PC-9 (cell line): ENCODE measurements at regions of chr3 and their contacts with region 1.

Region 1: DNA sequence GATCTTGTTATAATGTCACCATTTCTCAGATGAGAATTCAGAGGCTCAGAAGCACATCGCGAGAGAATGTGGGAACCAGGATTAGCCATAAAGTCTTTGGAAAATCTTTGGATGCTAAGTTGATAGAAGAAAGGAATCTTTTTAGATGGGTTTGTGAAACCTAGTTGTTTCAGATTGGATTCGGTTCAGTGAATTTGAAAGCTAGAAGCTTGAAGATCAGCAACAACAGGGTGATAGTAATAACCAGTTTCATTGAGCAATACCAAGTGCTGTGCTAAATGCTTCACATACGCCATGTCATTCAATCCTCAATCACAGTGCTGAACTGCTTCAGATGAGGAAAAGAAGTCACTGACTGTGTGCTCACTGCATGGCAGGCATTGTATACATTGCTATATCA is 47.4 kb upstream of the MITF start:
- DNase-seq: no peak
- H3K4me3 ChIP-seq: no peak overlapping the region
- H3K27ac ChIP-seq: no peak overlapping the region
- H3K4me1 ChIP-seq: no peaks in the 10 kb centered on the region
- H3K27me3 ChIP-seq: no peaks in the 10 kb centered on the region
- CTCF ChIP-seq: no peak

Region 2: GRCh38 chr3:69439643-69440270 is 252.1 kb before region 1 on chr3:
- CTCF ChIA-PET with region 1: no interaction called
- POLR2A ChIA-PET with region 1: interaction called, 21 read pairs
- intact Hi-C with region 1: no loop called
- DNase-seq: peak in 1 of 2 experiments; percentile 3
- H3K4me3 ChIP-seq: no peak overlapping the region
- H3K27ac ChIP-seq: no peak overlapping the region
- H3K4me1 ChIP-seq: no peaks in the 10 kb centered on the region
- H3K27me3 ChIP-seq: no peaks in the 10 kb centered on the region
- CTCF ChIP-seq: peak; percentile 68

Region 3: DNA sequence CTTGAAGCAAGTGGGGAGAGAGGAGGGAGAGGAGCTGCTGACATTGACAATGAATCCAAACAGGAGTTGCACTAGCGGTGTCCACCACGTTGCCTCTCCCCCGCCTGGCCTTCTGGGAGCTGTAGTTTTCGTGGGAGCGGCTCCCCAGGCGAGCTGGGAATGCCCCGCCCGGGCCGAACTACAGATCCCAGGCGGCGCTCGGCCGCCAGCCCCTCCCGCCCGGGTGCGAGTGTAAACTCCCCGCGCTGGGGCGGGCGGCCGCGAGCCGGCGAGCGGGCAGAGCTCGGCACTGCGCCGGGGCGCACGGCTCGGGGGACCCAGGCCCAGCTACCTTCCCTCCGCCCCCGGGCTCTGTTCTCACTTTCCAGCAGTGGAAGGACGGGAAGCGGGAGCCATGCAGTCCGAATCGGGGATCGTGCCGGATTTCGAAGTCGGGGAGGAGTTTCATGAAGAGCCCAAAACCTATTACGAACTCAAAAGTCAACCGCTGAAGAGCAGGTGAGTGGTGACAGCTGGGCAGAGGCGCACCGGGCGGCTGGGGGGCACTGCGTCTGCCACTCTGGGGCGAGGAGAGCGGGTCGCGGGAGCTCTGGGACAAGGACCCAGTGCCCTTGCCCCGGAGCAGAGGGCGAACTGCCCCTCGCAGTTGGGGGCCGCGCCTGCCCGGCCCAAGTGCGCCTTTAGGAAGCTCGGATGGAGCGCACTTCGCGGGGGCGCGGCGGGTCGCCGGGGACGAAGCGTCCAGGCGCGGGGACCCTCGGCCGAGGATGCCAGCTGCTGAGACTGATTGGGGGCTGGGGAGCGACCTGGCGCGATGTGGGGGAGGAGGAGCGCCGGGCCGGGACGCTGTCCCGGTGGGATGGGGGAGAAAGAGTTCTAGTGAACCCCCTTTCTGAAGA is 47.6 kb after region 1 on chr3 and contains the start of gene MITF:
- CTCF ChIA-PET with region 1: no interaction called
- POLR2A ChIA-PET with region 1: no interaction called
- intact Hi-C with region 1: loop called (anchors 5 kb)
- DNase-seq: peak; percentile 75 to 88
- H3K4me3 ChIP-seq: peak within 1 kb of the TSS; percentile 83
- H3K27ac ChIP-seq: no peak within 1 kb of the TSS
- H3K4me1 ChIP-seq: peaks cover 18% of the 10 kb centered on the region; the same call in 1 of the 2 replicates
- H3K27me3 ChIP-seq: no peaks in the 10 kb centered on the region
- CTCF ChIP-seq: no peak
- total RNA-seq, gene MITF: 15.5 and 17.2 TPM in 2 replicates

Region 4: DNA sequence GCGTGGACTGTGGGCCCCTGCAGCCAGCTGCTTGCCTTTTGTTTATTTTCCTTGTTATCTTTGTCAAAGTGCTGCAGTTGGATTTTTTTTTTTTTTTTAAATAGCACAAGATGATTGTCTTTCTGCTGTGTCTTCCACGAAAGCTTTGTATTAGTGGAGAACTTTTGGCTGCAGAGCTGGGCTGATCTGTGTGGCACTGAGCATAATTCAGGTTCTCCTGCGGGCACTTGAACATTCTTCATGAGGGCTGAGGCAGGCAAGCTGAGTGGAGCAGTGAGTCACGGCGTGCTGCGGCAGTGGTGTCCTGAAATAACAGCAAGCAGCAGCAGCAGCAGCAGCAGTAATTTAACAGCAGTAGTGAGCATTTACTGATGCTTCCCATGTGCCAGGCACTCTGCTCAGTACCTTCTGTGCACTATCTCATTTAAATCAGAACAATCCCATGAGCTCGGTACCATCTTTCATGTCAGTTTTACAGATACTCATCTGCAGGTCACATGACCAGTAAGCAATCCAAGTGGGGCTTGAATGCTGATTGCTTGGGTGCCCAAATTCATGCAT is 93.2 kb after region 1 on chr3:
- CTCF ChIA-PET with region 1: no interaction called
- POLR2A ChIA-PET with region 1: no interaction called
- intact Hi-C with region 1: loop called (anchors 1 kb)
- DNase-seq: peak in 1 of 2 experiments; percentile 67
- H3K4me3 ChIP-seq: no peak overlapping the region
- H3K27ac ChIP-seq: no peak overlapping the region
- H3K4me1 ChIP-seq: peaks cover 12% of the 10 kb centered on the region
- H3K27me3 ChIP-seq: no peaks in the 10 kb centered on the region
- CTCF ChIP-seq: no peak

Region 5: DNA sequence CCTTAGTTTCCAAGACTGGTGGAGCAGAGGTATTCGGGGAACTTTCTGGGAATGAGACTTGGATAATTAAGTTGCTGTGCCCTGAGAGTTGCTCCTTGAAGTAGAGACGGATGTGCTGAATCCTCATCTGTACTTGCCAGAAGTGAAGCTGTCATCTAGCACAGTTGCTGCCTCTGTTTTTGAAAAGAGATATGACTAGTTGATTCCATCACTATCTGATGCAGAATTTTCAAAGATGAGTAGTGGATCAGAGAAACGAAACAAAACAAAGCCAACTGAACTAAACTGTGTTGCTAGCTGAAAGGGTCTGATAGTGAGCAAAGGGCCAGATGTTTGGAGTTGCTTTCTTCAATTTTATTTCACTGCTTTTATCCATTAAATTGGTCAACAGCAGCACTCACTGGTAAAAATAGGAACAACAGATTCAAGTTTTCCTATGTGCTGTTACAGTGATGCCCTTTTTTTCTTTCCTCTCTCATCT is 100.1 kb after region 1 on chr3:
- CTCF ChIA-PET with region 1: interaction called, 21 read pairs
- POLR2A ChIA-PET with region 1: no interaction called
- intact Hi-C with region 1: loop called (anchors 1 kb)
- DNase-seq: no peak
- H3K4me3 ChIP-seq: no peak overlapping the region
- H3K27ac ChIP-seq: no peak overlapping the region
- H3K4me1 ChIP-seq: peaks cover 9% of the 10 kb centered on the region
- H3K27me3 ChIP-seq: no peaks in the 10 kb centered on the region
- CTCF ChIP-seq: peak; percentile 51

Region 6: DNA sequence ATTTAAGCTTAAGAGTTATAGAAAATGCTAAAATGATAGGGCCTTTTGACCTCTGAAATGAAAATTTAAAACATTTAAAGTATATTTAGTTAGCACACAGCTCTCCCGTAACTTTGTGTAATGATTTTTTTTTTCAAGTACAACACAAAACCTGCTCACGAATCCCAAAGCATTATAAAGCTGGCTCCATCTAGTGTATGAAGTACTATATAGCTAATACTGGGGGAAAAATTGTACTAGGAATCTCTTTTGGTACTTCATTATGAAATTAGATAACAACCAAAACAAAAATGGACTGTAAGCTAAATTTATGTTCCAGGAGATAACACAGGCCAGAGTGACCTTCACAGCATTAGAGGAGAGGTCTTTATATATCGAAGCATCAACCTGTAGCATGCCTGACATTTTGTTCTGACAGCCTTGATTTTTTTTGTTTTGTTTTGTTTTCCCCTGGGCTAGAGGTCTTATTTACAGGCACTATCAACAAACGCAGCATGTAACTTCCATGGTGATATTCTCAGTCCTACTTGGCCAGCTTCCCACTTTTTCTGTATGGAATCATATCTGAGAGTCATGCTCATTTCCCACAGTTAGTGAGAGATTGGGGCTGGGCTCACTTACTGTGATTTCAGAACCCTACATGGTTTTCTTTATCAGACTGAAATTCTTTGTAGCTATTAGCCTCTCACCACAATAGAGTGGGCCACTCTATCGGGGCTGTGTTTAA is 163.7 kb after region 1 on chr3:
- CTCF ChIA-PET with region 1: interaction called, 5 read pairs
- POLR2A ChIA-PET with region 1: no interaction called
- intact Hi-C with region 1: loop called (anchors 1 kb)
- DNase-seq: no peak
- H3K4me3 ChIP-seq: no peak overlapping the region
- H3K27ac ChIP-seq: no peak overlapping the region
- H3K4me1 ChIP-seq: peaks cover 5% of the 10 kb centered on the region; the same call in 1 of the 2 replicates
- H3K27me3 ChIP-seq: no peaks in the 10 kb centered on the region
- CTCF ChIP-seq: peak; percentile 36; the same call in 1 of the 2 replicates

Region 7: GRCh38 chr3:69948246-69948862 is 256.5 kb after region 1 on chr3:
- CTCF ChIA-PET with region 1: no interaction called
- POLR2A ChIA-PET with region 1: no interaction called
- intact Hi-C with region 1: loop called (anchors 1 kb)
- DNase-seq: peak; percentile 2 to 40
- H3K4me3 ChIP-seq: no peak overlapping the region
- H3K27ac ChIP-seq: no peak overlapping the region
- H3K4me1 ChIP-seq: no peaks in the 10 kb centered on the region
- H3K27me3 ChIP-seq: no peaks in the 10 kb centered on the region
- CTCF ChIP-seq: peak; percentile 72